MCF 10A (cell line): ENCODE measurements at regions of chr4 and their contacts with region 1.

Region 1: GRCh38 chr4:76179398-76180318 is 31.5 kb upstream of the NUP54 start:
- DNase-seq: peak; percentile 87
- H3K4me3 Mint-ChIP-seq: no peak overlapping the region
- H3K27ac Mint-ChIP-seq: no peak overlapping the region
- H3K4me1 Mint-ChIP-seq: peaks cover 8% of the 10 kb centered on the region
- H3K27me3 Mint-ChIP-seq: no peaks in the 10 kb centered on the region
- CTCF ChIP-seq: peak; percentile 94

Region 2: DNA sequence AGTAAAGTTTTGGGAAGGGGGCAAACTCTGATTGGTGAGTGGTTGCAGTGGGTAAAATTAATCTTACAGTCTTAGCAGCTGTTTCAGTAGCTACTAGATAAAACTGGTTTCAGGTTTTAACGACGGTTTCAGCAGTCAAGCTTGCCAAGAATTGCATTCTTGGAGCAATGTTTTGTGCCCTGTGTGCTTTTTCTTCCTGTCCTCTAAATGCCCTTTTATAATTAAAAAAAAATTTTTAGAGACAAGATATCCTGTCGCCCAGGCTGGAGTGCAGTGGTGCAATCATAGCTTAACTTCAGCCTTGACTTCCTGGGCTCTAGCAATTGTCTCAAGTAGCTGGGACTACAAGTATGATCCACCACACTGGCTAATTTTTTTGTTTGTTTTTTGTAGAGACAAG is 271.1 kb before region 1 on chr4:
- CTCF ChIA-PET with region 1: no interaction called
- POLR2A ChIA-PET with region 1: no interaction called
- intact Hi-C with region 1: no loop called
- DNase-seq: no peak
- H3K4me3 Mint-ChIP-seq: no peak overlapping the region
- H3K27ac Mint-ChIP-seq: no peak overlapping the region
- H3K4me1 Mint-ChIP-seq: peaks cover 6% of the 10 kb centered on the region
- H3K27me3 Mint-ChIP-seq: no peaks in the 10 kb centered on the region
- CTCF ChIP-seq: no peak

Region 3: DNA sequence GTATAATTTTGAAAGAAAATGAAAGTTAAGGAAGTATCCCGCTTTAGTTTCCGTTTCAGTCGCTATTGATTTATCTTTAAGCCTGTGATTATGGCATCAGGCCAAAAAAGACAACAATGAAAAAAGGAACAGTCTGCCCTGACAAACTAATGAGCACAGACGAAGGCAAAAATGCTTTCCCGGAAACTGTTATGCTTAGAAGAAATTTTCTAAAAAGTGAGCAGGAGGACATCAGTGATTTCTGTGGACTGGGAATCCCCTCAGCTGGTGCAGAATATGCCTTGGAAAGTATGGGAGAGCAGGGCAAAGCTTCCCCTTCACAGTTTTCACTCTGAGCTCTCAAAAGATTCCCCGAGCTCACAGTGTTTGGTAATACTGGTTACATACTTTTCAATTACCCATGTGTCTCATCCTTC is 151.3 kb before region 1 on chr4:
- CTCF ChIA-PET with region 1: no interaction called
- POLR2A ChIA-PET with region 1: no interaction called
- intact Hi-C with region 1: no loop called
- DNase-seq: peak; percentile 6
- H3K4me3 Mint-ChIP-seq: peak overlapping the region; percentile 26
- H3K27ac Mint-ChIP-seq: no peak overlapping the region
- H3K4me1 Mint-ChIP-seq: peaks cover 6% of the 10 kb centered on the region
- H3K27me3 Mint-ChIP-seq: no peaks in the 10 kb centered on the region
- CTCF ChIP-seq: no peak

Region 4: GRCh38 chr4:76148142-76148865 is 31.4 kb before region 1 on chr4 and contains the start of gene NUP54:
- CTCF ChIA-PET with region 1: interaction called, 15 read pairs
- POLR2A ChIA-PET with region 1: interaction called, 4 read pairs
- intact Hi-C with region 1: no loop called
- DNase-seq: peak; percentile 94
- H3K4me3 Mint-ChIP-seq: peak within 1 kb of the TSS; percentile 98
- H3K27ac Mint-ChIP-seq: peak within 1 kb of the TSS; percentile 98
- H3K4me1 Mint-ChIP-seq: peaks cover 12% of the 10 kb centered on the region
- H3K27me3 Mint-ChIP-seq: no peaks in the 10 kb centered on the region
- CTCF ChIP-seq: no peak
- total RNA-seq, gene NUP54: 46.9 and 51.5 TPM in 2 replicates

Region 5: DNA sequence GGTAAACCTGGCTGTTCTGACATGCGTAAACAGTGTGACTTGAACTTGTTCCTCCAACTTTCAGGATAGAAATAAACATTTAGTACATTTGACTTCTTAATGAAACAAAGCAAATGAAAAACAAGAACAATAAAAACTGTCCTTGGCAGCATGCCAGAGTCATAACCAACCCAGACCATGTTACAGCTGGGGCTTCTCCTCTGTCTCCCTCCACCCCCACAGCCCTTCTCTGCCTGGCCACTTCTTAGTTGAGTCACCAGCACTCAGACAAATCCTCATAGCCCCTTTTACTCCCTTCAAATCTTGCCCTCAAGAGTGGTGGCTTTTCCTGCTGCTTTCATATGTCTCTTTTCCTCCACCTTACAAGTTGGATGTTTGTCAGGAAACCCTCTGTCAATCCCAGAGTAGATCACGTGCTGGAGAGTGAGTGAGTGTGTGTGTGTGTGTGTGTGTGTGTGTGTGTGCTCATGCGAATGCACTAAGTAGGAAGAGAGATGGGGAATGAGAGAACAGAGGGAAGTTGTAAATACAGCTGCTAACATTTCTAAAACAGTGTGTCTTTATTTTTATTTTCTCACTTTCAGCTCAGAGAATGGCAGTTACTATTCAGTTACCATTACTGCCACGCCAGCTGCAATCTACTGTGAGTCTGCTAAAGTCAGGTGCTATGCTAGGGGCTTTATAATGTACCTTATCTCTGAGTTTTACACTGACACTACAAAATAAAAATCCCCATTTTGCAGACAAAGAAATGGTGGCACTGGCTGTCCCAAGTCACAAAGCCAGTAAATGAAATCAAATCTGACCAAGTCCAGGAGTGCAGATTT is 19.0 kb after region 1 on chr4:
- CTCF ChIA-PET with region 1: interaction called, 13 read pairs
- POLR2A ChIA-PET with region 1: interaction called, 8 read pairs
- intact Hi-C with region 1: no loop called
- DNase-seq: peak; percentile 73
- H3K4me3 Mint-ChIP-seq: peak overlapping the region; percentile 17
- H3K27ac Mint-ChIP-seq: peak overlapping the region; percentile 94
- H3K4me1 Mint-ChIP-seq: peaks cover 36% of the 10 kb centered on the region
- H3K27me3 Mint-ChIP-seq: no peaks in the 10 kb centered on the region
- CTCF ChIP-seq: no peak

Region 6: GRCh38 chr4:76251441-76252270 is 72.0 kb after region 1 on chr4 and contains the start of gene FAM47E:
- CTCF ChIA-PET with region 1: interaction called, 28 read pairs
- POLR2A ChIA-PET with region 1: interaction called, 4 read pairs
- intact Hi-C with region 1: loop called (anchors 2 kb)
- DNase-seq: peak; percentile 45
- H3K4me3 Mint-ChIP-seq: peak within 1 kb of the TSS; percentile 70
- H3K27ac Mint-ChIP-seq: peak within 1 kb of the TSS; percentile 7
- H3K4me1 Mint-ChIP-seq: no peaks in the 10 kb centered on the region
- H3K27me3 Mint-ChIP-seq: peaks cover 47% of the 10 kb centered on the region
- CTCF ChIP-seq: peak; percentile 47
- total RNA-seq, gene FAM47E: 1.0 TPM in 2 replicates

Region 7: GRCh38 chr4:76377911-76378310 is 198.3 kb after region 1 on chr4:
- CTCF ChIA-PET with region 1: interaction called, 13 read pairs
- POLR2A ChIA-PET with region 1: no interaction called
- intact Hi-C with region 1: loop called (anchors 1 kb)
- DNase-seq: peak; percentile 57
- H3K4me3 Mint-ChIP-seq: no peak overlapping the region
- H3K27ac Mint-ChIP-seq: no peak overlapping the region
- H3K4me1 Mint-ChIP-seq: peaks cover 16% of the 10 kb centered on the region
- H3K27me3 Mint-ChIP-seq: no peaks in the 10 kb centered on the region
- CTCF ChIP-seq: peak; percentile 48

Region 8: DNA sequence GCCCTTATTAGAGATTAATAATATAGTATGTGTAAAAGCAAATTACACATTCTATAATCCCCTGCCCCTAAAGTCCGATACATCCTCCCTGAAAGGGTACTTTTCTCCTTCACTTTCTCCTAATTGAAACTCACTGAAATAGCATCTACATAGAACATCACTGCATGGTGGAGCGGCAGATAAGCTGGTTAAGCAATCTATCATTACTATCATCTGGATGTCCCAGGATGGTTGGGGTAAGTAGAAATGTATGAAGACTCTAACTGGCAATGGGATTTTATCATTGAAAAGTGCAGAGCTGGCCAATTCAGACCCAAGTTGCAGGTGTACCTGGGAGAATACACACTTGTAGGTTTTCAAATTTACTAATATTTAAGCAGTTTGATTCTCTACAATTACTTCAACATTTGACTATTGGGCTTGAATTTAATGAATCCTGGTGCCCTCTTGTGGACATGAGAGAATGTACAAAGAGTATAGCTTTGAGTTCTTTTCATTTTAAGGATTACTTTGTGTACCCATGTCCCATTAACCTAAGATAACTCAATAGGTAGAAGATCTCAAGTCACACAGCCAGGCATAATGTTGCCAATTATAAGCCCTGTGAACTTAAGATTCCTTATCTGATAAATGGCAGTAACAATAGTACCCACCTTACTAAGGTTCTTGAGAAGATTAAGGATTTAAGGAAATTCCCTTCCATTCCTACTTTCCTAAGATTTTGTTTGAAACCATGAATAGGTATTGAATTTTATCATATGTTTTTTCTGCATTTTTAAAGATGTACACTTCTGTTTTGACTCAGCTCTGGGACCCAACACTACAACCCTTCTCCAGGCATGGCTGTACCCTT is 325.2 kb after region 1 on chr4:
- CTCF ChIA-PET with region 1: interaction called, 31 read pairs
- POLR2A ChIA-PET with region 1: interaction called, 5 read pairs
- intact Hi-C with region 1: loop called (anchors 1 kb)
- DNase-seq: peak; percentile 75
- H3K4me3 Mint-ChIP-seq: no peak overlapping the region
- H3K27ac Mint-ChIP-seq: no peak overlapping the region
- H3K4me1 Mint-ChIP-seq: no peaks in the 10 kb centered on the region
- H3K27me3 Mint-ChIP-seq: no peaks in the 10 kb centered on the region
- CTCF ChIP-seq: peak; percentile 70